CD4-positive, alpha-beta memory T cell (primary cell): ENCODE measurements at regions of chr12 and their contacts with region 1.

Region 1: GRCh38 chr12:117063162-117063911 is 35.9 kb downstream of the TESC start:
- DNase-seq: peak in 4 of 5 donors; percentile 24 to 51 (median 44)
- H3K4me3 ChIP-seq: peak overlapping the region; percentile 22 to 40
- H3K4me3 Mint-ChIP-seq: peak overlapping the region; percentile 68 to 88 (median 82)
- H3K27ac ChIP-seq: no peak overlapping the region
- H3K27ac Mint-ChIP-seq: peak overlapping the region; percentile 74 to 96 (median 92)
- H3K4me1 ChIP-seq: peaks cover 27% of the 10 kb centered on the region
- H3K4me1 Mint-ChIP-seq: peaks cover 19 to 52% (median 35%) of the 10 kb centered on the region in 4 donors
- H3K27me3 ChIP-seq: no peaks in the 10 kb centered on the region
- H3K27me3 Mint-ChIP-seq: no peaks in the 10 kb centered on the region

Region 2: GRCh38 chr12:116955382-116956021 is 107.8 kb before region 1 on chr12:
- CTCF ChIA-PET with region 1: no interaction called
- POLR2A ChIA-PET with region 1: no interaction called
- intact Hi-C with region 1: no loop called
- DNase-seq: peak; percentile 35 to 45 (median 36)
- H3K4me3 ChIP-seq: no peak overlapping the region
- H3K4me3 Mint-ChIP-seq: no peak overlapping the region
- H3K27ac ChIP-seq: no peak overlapping the region
- H3K27ac Mint-ChIP-seq: no peak overlapping the region
- H3K4me1 ChIP-seq: peaks cover 3% of the 10 kb centered on the region
- H3K4me1 Mint-ChIP-seq: peaks cover 3 to 10% (median 7%) of the 10 kb centered on the region in 4 donors
- H3K27me3 ChIP-seq: no peaks in the 10 kb centered on the region
- H3K27me3 Mint-ChIP-seq: no peaks in the 10 kb centered on the region

Region 3: DNA sequence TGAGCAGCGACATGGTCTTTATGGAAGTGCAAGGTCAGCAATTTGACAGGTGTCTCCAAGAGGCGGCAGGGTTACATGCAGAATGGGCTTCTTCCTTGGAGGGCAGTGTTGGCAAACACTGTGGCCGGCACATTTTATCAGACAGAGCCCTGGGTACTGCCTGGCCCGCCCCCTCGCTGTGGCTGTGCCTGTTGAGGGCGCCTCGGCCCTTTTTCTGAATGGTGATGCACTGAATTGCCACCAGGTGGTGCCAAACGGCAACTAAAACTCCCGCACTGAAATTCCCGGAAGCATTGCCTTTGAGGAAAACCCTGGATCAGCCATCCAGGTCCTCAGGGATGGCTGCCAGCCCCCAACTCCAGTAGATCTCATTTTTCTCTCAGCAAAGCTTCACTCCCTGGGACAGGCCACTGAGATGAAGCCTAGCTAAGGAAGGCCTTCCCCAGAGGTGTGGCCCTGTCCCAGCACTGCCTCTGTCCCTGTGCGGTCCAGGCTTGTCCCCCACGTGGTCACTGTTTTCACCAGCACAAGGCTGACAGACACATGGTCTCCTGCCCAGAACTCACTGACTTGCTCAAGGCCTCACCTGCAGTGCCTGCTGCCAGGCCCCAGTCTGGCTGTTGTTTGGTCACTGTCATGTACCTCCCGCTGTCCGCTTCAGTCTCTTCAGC is 37.7 kb before region 1 on chr12:
- CTCF ChIA-PET with region 1: interaction called, 10 read pairs
- POLR2A ChIA-PET with region 1: no interaction called
- intact Hi-C with region 1: no loop called
- DNase-seq: peak; percentile 39 to 52 (median 40)
- H3K4me3 ChIP-seq: no peak overlapping the region
- H3K4me3 Mint-ChIP-seq: peak overlapping the region in 1 of 8 donors; percentile 23
- H3K27ac ChIP-seq: no peak overlapping the region
- H3K27ac Mint-ChIP-seq: peak overlapping the region in 5 of 7 donors; percentile 25 to 82 (median 59)
- H3K4me1 ChIP-seq: peaks cover 6% of the 10 kb centered on the region
- H3K4me1 Mint-ChIP-seq: peaks cover 0 to 10% (median 5%) of the 10 kb centered on the region in 4 donors
- H3K27me3 ChIP-seq: no peaks in the 10 kb centered on the region
- H3K27me3 Mint-ChIP-seq: no peaks in the 10 kb centered on the region